BJ (cell line): ENCODE measurements at regions of chr1 and their contacts with region 1.

Region 1: DNA sequence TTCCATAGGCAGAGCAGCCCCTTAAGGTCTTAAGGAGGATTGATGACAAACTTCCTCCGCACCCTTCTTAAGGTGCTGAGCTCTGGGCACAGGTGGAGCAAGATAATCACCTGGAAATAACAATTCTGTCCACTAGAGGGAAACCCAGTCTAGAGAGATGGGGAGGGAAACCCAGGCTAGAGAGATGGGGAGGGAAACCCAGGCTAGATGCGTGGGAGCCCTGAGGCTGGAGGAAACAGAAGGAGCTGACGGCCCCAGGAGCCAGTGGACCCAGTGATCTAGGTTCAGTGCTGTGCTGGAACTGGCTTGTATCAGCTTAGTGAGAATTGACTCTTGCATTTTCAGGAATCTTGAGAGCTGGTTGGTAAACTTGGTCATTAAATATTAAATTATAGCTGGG is 17.8 kb upstream of the MYCL start:
- DNase-seq: no peak
- H3K4me3 ChIP-seq: no peak overlapping the region
- H3K27me3 ChIP-seq: no peaks in the 10 kb centered on the region; the same call in none of the 2 replicates
- CTCF ChIP-seq: peak; percentile 62

Region 2: GRCh38 chr1:39901698-39902459 is 17.7 kb before region 1 on chr1 and contains the start of gene MYCL:
- CTCF ChIA-PET with region 1: interaction called, 56 read pairs
- POLR2A ChIA-PET with region 1: no interaction called
- DNase-seq: no peak
- H3K4me3 ChIP-seq: peak within 1 kb of the TSS; percentile 55
- H3K27me3 ChIP-seq: peaks cover 14% of the 10 kb centered on the region
- CTCF ChIP-seq: peak; percentile 79
- polyA plus RNA-seq, gene MYCL: 0.22 TPM in 2 replicates

Region 3: GRCh38 chr1:39933956-39934941 is 14.7 kb after region 1 on chr1:
- CTCF ChIA-PET with region 1: interaction called, 29 read pairs
- POLR2A ChIA-PET with region 1: no interaction called
- DNase-seq: peak; percentile 96
- H3K4me3 ChIP-seq: no peak overlapping the region
- H3K27me3 ChIP-seq: peaks cover under 1% of the 10 kb centered on the region; the same call in 1 of the 2 replicates
- CTCF ChIP-seq: no peak

Region 4: GRCh38 chr1:39960431-39960958 is 41.0 kb after region 1 on chr1:
- CTCF ChIA-PET with region 1: interaction called, 228 read pairs
- POLR2A ChIA-PET with region 1: no interaction called
- DNase-seq: no peak
- H3K4me3 ChIP-seq: no peak overlapping the region
- H3K27me3 ChIP-seq: no peaks in the 10 kb centered on the region
- CTCF ChIP-seq: no peak

Region 5: GRCh38 chr1:39981957-39982356 is 62.4 kb after region 1 on chr1:
- CTCF ChIA-PET with region 1: interaction called, 228 read pairs
- POLR2A ChIA-PET with region 1: no interaction called
- DNase-seq: peak; percentile 64
- H3K4me3 ChIP-seq: no peak overlapping the region
- H3K27me3 ChIP-seq: no peaks in the 10 kb centered on the region
- CTCF ChIP-seq: no peak